ENCODE measurements at regions of chr3 and their contacts with region 1.

Region 1: DNA sequence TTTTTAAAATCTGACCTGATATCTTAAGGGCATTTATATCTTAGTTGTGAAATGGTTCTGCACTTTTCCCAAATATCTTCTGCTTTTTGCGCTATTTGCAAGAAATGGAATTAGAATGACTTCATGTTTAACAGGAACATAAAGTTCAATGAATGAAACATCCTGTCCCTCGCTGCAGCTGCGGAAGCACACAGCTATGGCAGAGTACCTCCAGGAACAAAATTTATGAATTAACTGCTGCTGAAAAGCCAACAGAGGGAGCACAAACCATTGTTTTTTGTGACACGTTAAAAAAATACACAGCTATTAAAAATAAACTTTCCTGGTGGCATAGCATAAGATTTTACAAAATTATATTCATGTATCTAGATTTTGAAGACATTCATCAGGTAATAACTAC is 404.4 kb upstream of the MDFIC2 start:
- DNase-seq: no peak

Region 2: GRCh38 chr3:70640481-70640880 is 76.4 kb before region 1 on chr3:
- intact Hi-C with region 1: no loop called
- DNase-seq: no peak

Region 3: GRCh38 chr3:70771426-70772147 is 54.8 kb after region 1 on chr3:
- intact Hi-C with region 1: no loop called
- DNase-seq: no peak

Region 4: DNA sequence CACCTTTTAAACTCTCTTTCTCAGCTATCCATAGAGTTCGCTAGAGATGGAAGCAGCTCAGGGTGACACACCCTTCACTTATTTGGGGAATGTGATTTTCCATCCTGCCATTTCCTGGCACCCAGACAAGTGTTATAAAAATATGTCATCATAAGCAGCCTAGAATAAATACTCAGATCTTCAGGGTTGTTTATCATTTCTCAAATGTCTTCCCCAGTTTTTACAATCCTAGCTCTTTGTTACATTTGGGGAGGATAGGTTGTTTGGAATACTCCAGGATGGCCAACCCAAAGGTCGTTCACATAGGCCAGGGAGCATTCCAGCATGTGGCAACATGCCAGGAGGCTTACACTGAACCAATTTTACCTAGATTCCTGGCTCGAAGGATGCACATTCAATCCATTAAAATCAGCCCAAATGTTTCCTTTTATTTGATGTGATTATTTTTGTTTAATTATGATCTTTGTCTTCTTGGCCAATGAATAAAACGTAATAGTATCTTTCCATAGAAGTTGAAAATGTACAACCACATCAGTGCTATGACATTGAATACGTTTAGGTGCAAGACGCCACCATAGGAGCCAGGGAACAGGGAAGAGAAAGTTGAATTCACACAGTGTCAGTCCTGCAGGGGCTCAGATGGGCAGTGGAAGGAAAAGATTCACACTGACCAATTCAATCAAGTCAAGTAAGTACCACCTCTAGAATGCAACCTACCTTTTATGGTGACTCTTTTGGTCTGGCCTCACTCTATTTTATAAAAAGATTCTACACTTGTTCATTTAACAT is 133.3 kb after region 1 on chr3:
- intact Hi-C with region 1: no loop called
- DNase-seq: no peak

Region 5: DNA sequence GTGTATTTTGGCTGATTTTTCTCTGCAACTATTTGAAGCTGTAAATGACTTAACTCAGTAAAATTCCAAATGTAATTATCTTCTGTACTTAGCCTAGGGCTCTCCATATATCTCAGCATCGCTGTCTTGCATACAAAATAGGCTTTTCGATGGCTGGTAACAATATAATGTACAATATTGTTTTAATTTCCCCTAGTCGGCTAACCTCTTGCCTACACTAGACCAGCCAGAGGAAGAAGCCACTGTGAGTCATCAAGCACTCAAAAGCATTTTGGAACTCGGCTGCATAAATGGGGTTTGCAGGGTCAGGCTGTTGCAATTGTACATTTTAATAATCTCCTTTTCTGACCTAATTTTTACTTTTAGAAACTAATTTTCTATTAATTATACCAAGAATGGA is 282.9 kb after region 1 on chr3:
- intact Hi-C with region 1: loop called (anchors 10 kb)
- DNase-seq: no peak

Measured in cardiac septum (tissue), 1 donor.